ENCODE measurements at regions of chr2 and their contacts with region 1.

Region 1: GRCh38 chr2:11863513-11864328 is 117.3 kb downstream of the LPIN1 start:
- DNase-seq: peak; percentile 66 to 77 (median 73)
- ATAC-seq: peak; percentile 87
- H3K4me3 ChIP-seq: no peak overlapping the region
- H3K4me1 ChIP-seq: no peaks in the 10 kb centered on the region
- CTCF ChIP-seq: peak; percentile 89

Region 2: DNA sequence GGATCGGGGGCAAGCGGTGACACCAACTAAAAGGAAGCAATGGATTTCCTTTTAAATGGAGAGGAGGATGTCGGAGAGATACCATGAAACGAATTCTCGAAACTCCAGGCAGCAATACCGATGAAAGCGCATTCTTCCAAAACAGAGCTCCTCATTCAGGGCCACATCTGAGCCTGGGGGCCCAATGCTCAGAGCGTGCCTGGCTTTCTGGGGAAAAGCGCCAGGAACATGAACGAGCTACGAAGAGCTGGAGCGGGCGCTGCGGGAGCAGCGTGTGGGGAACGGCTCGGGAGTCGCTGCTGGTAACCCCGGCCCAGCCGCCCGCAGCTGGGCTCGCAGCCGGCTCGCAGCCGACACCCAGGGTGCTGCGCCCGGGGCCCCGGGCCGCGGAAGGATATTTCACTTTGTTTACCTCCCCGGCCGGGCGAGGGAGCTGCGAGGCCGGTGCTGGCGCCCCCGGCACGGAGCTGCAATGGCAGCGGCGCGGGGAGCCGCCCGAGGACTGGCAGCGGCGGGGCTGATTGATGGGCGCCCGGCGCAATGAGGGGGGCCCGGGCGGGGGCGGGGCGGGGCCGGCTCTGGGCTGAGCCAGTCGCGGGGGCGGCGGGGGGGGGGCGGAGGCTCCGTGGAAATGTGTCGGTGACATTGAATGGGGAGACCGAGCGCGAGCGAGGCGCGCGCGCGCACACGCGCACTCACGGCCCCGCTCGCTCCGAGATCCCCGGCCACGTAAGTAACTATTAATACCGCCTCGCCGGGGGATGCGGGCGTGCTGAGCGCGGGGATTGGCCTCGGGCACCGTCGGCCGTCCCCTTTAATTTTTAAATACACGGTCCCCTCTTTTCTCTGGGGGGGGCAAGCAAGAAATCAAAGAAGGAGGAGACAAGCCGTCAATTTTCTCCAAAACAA is 852.8 kb after region 1 on chr2 and contains the start of gene TRIB2:
- intact Hi-C with region 1: loop called in 1 of 2 experiments (anchors 10 kb)
- DNase-seq: peak; percentile 79 to 91 (median 86)
- ATAC-seq: peak; percentile 83
- H3K4me3 ChIP-seq: peak within 1 kb of the TSS; percentile 26
- H3K4me1 ChIP-seq: peaks cover 2% of the 10 kb centered on the region
- CTCF ChIP-seq: no peak
- total RNA-seq, gene TRIB2: 4.9 to 28.3 (median 6.8) TPM

Region 3: DNA sequence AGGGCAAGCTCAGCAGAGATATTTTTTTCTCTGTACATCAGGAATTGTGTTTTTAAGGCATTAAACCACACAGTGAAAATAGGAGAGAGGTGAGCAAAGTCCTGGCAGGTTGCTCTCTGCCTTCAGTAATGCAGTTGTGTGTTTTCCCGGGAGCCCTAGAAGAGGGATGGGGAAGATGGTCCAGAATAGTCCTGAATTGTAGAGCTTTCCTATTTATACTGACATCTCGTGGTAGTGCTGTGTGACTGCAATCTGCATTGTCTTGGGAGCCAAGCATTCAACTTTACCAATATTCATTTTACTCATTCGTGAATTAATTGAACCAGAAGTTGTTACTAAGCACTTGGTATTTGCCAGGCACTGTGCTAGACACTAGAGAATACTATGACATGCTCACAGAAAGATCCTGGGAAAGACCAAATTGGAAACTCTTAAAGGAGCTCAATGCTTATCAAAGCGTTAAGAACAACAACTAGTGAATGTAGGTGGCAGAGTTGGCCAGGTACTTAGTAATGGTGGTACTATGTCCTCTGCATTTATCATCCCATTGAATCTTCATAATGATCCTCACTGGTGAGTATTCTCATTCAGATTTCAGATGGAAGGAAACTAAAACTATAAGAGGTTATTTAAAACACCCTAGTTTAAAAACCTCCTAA is 1067.6 kb after region 1 on chr2:
- intact Hi-C with region 1: loop called in 1 of 2 experiments (anchors 5 kb)
- DNase-seq: peak in 1 of 3 donors; percentile 9
- ATAC-seq: peak; percentile 63
- H3K4me3 ChIP-seq: no peak overlapping the region
- H3K4me1 ChIP-seq: no peaks in the 10 kb centered on the region
- CTCF ChIP-seq: peak; percentile 63

Region 4: DNA sequence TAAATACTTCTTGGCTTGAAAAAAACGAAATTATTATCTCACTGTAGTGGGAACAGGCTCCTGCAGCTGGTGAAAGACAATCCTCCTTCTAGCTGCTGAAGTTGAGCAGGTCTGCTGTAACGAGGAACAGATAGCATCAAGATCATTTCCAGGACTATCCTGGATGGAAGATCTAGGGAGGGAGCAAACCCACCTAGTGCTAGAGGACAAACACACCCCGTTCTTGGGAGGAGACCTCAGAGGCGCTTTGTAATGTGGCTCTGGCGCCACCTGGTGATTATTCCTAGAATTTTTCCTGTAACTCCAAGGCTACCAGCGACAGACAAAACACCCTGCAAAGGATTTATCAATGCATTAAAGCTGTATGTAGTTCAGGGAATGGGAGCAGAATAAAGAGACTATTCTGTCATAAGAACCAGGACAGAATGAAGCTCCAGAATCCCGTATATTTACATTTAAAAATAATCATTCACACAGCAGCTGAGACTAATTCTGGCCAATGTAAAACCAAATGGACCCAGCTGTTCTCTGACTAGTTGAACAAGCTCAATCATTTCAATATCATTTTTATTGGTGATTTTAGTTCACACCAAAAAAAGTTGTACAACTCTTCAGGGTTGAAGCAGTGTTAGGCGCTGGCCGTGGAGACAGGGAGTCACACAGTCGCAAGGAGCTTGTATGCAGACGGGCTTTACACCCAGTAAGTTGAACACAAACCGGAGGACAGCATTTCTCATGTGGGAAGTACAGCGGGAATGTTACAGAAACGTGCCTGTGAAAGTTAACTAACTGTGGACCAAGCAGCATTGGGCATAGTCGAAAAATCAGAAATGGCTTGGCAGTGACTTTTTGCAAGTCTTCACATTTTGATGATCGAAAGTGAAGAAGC is 1143.4 kb after region 1 on chr2:
- intact Hi-C with region 1: loop called (anchors 2 to 10 kb)
- DNase-seq: peak in 2 of 3 donors; percentile 30 to 73
- ATAC-seq: peak; percentile 69
- H3K4me3 ChIP-seq: no peak overlapping the region
- H3K4me1 ChIP-seq: no peaks in the 10 kb centered on the region
- CTCF ChIP-seq: peak; percentile 68